CD8-positive, alpha-beta T cell (primary cell): ENCODE measurements at regions of chr7 and their contacts with region 1.

Region 1: DNA sequence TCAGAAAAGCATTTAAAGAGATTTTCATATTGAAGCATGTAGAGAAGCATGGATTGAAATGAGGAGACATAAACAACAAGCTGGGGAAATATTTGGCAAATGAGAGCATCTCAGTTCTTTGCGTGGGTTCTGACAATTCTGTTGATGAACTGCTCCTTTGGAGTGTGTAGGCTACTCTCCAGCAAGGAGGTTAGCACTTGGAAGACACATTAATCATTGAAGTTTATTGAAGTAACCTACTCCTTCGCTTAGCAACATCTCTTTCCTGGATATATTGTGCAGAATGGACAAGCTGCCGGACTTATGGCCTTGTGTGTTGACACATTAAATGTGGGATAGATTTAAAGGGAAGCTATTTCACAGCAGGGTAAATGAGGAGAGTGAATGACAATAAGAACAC is 354.5 kb upstream of the VWC2 start:
- DNase-seq: no peak
- ATAC-seq: no peak
- H3K4me3 ChIP-seq: no peak overlapping the region
- H3K4me3 Mint-ChIP-seq: no peak overlapping the region
- H3K27ac ChIP-seq: no peak overlapping the region
- H3K27ac Mint-ChIP-seq: no peak overlapping the region
- H3K4me1 ChIP-seq: no peaks in the 10 kb centered on the region
- H3K4me1 Mint-ChIP-seq: no peaks in the 10 kb centered on the region
- H3K27me3 ChIP-seq: no peaks in the 10 kb centered on the region
- H3K27me3 Mint-ChIP-seq: no peaks in the 10 kb centered on the region
- CTCF ChIP-seq: no peak

Region 2: DNA sequence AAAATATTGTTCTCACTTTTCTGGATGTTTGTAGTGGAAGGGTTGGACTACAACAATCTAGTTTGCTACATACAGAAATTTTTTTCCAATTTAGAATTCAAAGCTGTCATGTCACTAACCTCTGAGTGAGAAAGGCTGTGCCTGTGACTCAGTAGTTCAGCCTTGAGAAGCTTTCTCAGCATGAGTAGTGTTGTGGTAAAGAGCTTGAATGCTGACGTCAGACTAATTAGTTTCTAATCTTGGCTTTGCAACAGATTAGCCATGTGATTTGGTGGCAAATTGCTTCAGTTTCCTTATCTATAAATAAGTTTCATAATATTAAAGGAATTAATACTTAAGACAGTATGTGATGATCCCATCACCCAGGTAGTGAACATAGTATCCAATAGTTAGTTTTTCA is 1163.9 kb before region 1 on chr7:
- CTCF ChIA-PET with region 1: no interaction called
- POLR2A ChIA-PET with region 1: no interaction called
- intact Hi-C with region 1: no loop called
- DNase-seq: no peak
- ATAC-seq: no peak
- H3K4me3 ChIP-seq: no peak overlapping the region
- H3K4me3 Mint-ChIP-seq: no peak overlapping the region
- H3K27ac ChIP-seq: no peak overlapping the region
- H3K27ac Mint-ChIP-seq: no peak overlapping the region
- H3K4me1 ChIP-seq: no peaks in the 10 kb centered on the region
- H3K4me1 Mint-ChIP-seq: no peaks in the 10 kb centered on the region
- H3K27me3 ChIP-seq: no peaks in the 10 kb centered on the region
- H3K27me3 Mint-ChIP-seq: no peaks in the 10 kb centered on the region
- CTCF ChIP-seq: no peak

Region 3: DNA sequence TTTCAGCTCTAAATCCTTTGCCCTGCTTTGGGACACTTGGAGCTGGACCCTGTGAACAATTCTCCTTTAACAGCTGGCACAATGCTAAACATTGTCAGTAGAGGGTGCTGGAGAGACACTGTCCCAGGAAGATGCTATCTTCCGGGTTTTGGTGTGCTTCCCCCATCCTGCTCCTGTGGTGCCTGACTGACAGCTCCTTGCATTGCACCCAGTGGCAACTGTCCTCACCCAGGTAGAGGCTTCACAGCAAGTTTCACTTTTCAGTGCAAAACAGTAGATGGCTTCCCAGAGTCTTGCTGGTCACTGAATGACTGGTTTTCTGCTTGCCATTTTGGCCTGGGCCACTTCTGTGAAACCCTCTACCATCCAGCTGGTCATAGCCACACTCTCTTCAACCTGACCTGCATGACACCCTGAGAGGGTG is 417.3 kb before region 1 on chr7:
- CTCF ChIA-PET with region 1: no interaction called
- POLR2A ChIA-PET with region 1: no interaction called
- intact Hi-C with region 1: loop called in 1 of 2 experiments (anchors 5 kb)
- DNase-seq: peak in 1 of 9 experiments; percentile 1
- ATAC-seq: no peak
- H3K4me3 ChIP-seq: no peak overlapping the region
- H3K4me3 Mint-ChIP-seq: no peak overlapping the region
- H3K27ac ChIP-seq: no peak overlapping the region
- H3K27ac Mint-ChIP-seq: no peak overlapping the region
- H3K4me1 ChIP-seq: no peaks in the 10 kb centered on the region
- H3K4me1 Mint-ChIP-seq: no peaks in the 10 kb centered on the region
- H3K27me3 ChIP-seq: no peaks in the 10 kb centered on the region
- H3K27me3 Mint-ChIP-seq: no peaks in the 10 kb centered on the region
- CTCF ChIP-seq: no peak

Region 4: DNA sequence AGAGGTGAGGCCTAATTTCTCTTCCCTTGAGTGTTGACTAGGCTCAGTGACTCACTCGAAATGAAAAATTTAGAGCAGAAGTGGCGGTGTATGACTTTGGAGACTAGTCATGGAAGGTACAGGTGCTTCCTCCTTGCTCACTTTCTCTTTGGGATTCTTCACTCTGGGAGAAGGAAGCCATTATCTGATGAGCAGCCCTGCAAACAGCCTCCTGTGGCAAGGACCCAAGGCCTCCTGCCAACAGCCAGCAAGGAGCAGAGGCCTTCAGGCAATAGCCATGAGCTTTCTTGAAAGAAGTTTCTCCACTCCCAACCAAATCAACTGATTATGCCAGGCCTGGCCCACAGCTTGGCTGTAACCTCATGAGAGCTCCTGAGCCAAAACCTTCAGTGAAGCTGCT is 15.1 kb before region 1 on chr7:
- CTCF ChIA-PET with region 1: no interaction called
- POLR2A ChIA-PET with region 1: no interaction called
- intact Hi-C with region 1: no loop called
- DNase-seq: no peak
- ATAC-seq: no peak
- H3K4me3 ChIP-seq: no peak overlapping the region
- H3K4me3 Mint-ChIP-seq: no peak overlapping the region
- H3K27ac ChIP-seq: no peak overlapping the region
- H3K27ac Mint-ChIP-seq: no peak overlapping the region
- H3K4me1 ChIP-seq: no peaks in the 10 kb centered on the region
- H3K4me1 Mint-ChIP-seq: no peaks in the 10 kb centered on the region
- H3K27me3 ChIP-seq: no peaks in the 10 kb centered on the region
- H3K27me3 Mint-ChIP-seq: no peaks in the 10 kb centered on the region
- CTCF ChIP-seq: no peak

Region 5: DNA sequence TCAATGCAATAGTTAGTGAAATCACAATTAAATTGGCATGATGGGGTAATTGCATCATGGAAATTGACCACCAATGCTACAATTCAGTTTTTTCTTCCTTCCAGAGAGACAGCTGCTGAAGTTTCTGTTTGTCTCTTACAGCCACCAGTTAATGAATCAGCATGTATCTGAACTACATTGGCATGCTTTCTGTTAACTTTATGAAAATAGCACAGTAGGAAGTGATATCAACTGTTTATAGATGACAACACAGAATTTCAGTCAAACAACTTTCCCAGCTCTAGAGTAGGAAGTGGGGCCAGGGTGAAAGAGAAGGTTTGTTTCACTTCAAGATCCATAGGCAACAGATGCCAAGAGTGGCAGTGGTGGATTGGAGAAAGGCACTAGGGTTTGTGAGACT is 14.8 kb after region 1 on chr7:
- CTCF ChIA-PET with region 1: no interaction called
- POLR2A ChIA-PET with region 1: no interaction called
- intact Hi-C with region 1: no loop called
- DNase-seq: no peak
- ATAC-seq: no peak
- H3K4me3 ChIP-seq: no peak overlapping the region
- H3K4me3 Mint-ChIP-seq: no peak overlapping the region
- H3K27ac ChIP-seq: no peak overlapping the region
- H3K27ac Mint-ChIP-seq: no peak overlapping the region
- H3K4me1 ChIP-seq: no peaks in the 10 kb centered on the region
- H3K4me1 Mint-ChIP-seq: no peaks in the 10 kb centered on the region
- H3K27me3 ChIP-seq: no peaks in the 10 kb centered on the region
- H3K27me3 Mint-ChIP-seq: no peaks in the 10 kb centered on the region
- CTCF ChIP-seq: no peak